ENCODE measurements at regions of chr14 and their contacts with region 1.

Region 1: GRCh38 chr14:59262717-59263454 is 74.4 kb downstream of the DAAM1 start:
- DNase-seq: no peak
- H3K4me3 ChIP-seq: no peak overlapping the region
- H3K27ac ChIP-seq: no peak overlapping the region
- H3K4me1 ChIP-seq: no peaks in the 10 kb centered on the region
- H3K27me3 ChIP-seq: no peaks in the 10 kb centered on the region
- CTCF ChIP-seq: peak; percentile 18 to 58 (median 56); a peak in 3 of 4 replicates
- EP300 ChIP-seq: no peak
- POLR2A ChIP-seq: no peak
- RAD21 ChIP-seq: peak; percentile 21 to 32; a peak in 2 of 4 replicates

Region 2: GRCh38 chr14:59244555-59244954 is 18.3 kb before region 1 on chr14:
- CTCF ChIA-PET with region 1: interaction called, 10 read pairs
- POLR2A ChIA-PET with region 1: interaction called, 3 read pairs
- DNase-seq: no peak
- H3K4me3 ChIP-seq: no peak overlapping the region
- H3K27ac ChIP-seq: no peak overlapping the region
- H3K4me1 ChIP-seq: no peaks in the 10 kb centered on the region
- H3K27me3 ChIP-seq: no peaks in the 10 kb centered on the region
- CTCF ChIP-seq: no peak
- EP300 ChIP-seq: no peak
- POLR2A ChIP-seq: no peak
- RAD21 ChIP-seq: no peak

Region 3: GRCh38 chr14:59275653-59276052 is 12.8 kb after region 1 on chr14:
- CTCF ChIA-PET with region 1: interaction called, 15 read pairs
- POLR2A ChIA-PET with region 1: no interaction called
- DNase-seq: no peak
- H3K4me3 ChIP-seq: no peak overlapping the region
- H3K27ac ChIP-seq: no peak overlapping the region
- H3K4me1 ChIP-seq: no peaks in the 10 kb centered on the region
- H3K27me3 ChIP-seq: no peaks in the 10 kb centered on the region
- CTCF ChIP-seq: no peak
- EP300 ChIP-seq: no peak
- POLR2A ChIP-seq: no peak
- RAD21 ChIP-seq: no peak

Measured in H1 (cell line).